Activated B cell treated with CpG ODN at 0.5 μM for 24 hours (primary cell): ENCODE measurements at regions of chr7 and their contacts with region 1.

Region 1: GRCh38 chr7:18541181-18541870 is 45.8 kb downstream of the HDAC9 start:
- DNase-seq: no peak
- ATAC-seq: no peak
- H3K4me3 Mint-ChIP-seq: no peak overlapping the region
- H3K27ac Mint-ChIP-seq: peak overlapping the region; percentile 16
- H3K4me1 Mint-ChIP-seq: peaks cover 64% of the 10 kb centered on the region
- H3K27me3 Mint-ChIP-seq: no peaks in the 10 kb centered on the region
- CTCF ChIP-seq: no peak

Region 2: GRCh38 chr7:18421297-18422002 is 119.9 kb before region 1 on chr7:
- CTCF ChIA-PET with region 1: no interaction called
- POLR2A ChIA-PET with region 1: interaction called, 12 read pairs
- intact Hi-C with region 1: no loop called
- DNase-seq: no peak
- ATAC-seq: peak; percentile 31
- H3K4me3 Mint-ChIP-seq: no peak overlapping the region
- H3K27ac Mint-ChIP-seq: no peak overlapping the region
- H3K4me1 Mint-ChIP-seq: peaks cover 18% of the 10 kb centered on the region
- H3K27me3 Mint-ChIP-seq: no peaks in the 10 kb centered on the region
- CTCF ChIP-seq: no peak

Region 3: GRCh38 chr7:18437101-18437500 is 104.2 kb before region 1 on chr7:
- CTCF ChIA-PET with region 1: no interaction called
- POLR2A ChIA-PET with region 1: no interaction called
- intact Hi-C with region 1: no loop called
- DNase-seq: no peak
- ATAC-seq: no peak
- H3K4me3 Mint-ChIP-seq: no peak overlapping the region
- H3K27ac Mint-ChIP-seq: no peak overlapping the region
- H3K4me1 Mint-ChIP-seq: peaks cover 19% of the 10 kb centered on the region
- H3K27me3 Mint-ChIP-seq: no peaks in the 10 kb centered on the region
- CTCF ChIP-seq: no peak

Region 4: GRCh38 chr7:18508443-18509427 is 32.6 kb before region 1 on chr7:
- CTCF ChIA-PET with region 1: interaction called, 3 read pairs
- POLR2A ChIA-PET with region 1: interaction called, 15 read pairs
- intact Hi-C with region 1: loop called (anchors 2 kb)
- DNase-seq: no peak
- ATAC-seq: peak; percentile 74
- H3K4me3 Mint-ChIP-seq: peak overlapping the region; percentile 82
- H3K27ac Mint-ChIP-seq: peak overlapping the region; percentile 99
- H3K4me1 Mint-ChIP-seq: peaks cover 89% of the 10 kb centered on the region
- H3K27me3 Mint-ChIP-seq: no peaks in the 10 kb centered on the region
- CTCF ChIP-seq: no peak

Region 5: GRCh38 chr7:18552943-18553584 is 11.7 kb after region 1 on chr7:
- CTCF ChIA-PET with region 1: no interaction called
- POLR2A ChIA-PET with region 1: interaction called, 8 read pairs
- intact Hi-C with region 1: loop called (anchors 1 kb)
- DNase-seq: no peak
- ATAC-seq: peak; percentile 77
- H3K4me3 Mint-ChIP-seq: peak overlapping the region; percentile 57
- H3K27ac Mint-ChIP-seq: peak overlapping the region; percentile 80
- H3K4me1 Mint-ChIP-seq: peaks cover 61% of the 10 kb centered on the region
- H3K27me3 Mint-ChIP-seq: no peaks in the 10 kb centered on the region
- CTCF ChIP-seq: no peak

Region 6: DNA sequence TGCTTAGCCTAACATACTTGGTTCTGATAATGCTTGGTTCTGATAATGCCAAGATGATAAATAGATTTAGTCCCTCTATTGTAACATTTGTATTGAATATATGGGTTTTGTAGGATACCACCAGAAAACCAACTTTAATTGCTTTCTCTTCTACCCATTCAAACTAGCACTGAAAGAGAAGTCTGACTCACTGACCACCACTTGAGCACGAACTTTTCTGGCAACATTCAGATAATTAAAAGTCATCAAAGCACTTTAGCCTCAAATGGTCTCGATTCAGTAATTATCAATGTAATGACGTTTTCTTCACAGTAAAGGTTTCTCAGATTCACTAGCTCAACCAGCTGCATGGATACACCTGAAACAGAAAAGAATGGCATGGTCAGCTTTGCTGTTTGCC is 17.2 kb after region 1 on chr7:
- CTCF ChIA-PET with region 1: no interaction called
- POLR2A ChIA-PET with region 1: interaction called, 8 read pairs
- intact Hi-C with region 1: loop called (anchors 1 kb)
- DNase-seq: no peak
- ATAC-seq: peak; percentile 31
- H3K4me3 Mint-ChIP-seq: no peak overlapping the region
- H3K27ac Mint-ChIP-seq: peak overlapping the region; percentile 43
- H3K4me1 Mint-ChIP-seq: peaks cover 49% of the 10 kb centered on the region
- H3K27me3 Mint-ChIP-seq: no peaks in the 10 kb centered on the region
- CTCF ChIP-seq: no peak